ENCODE measurements at regions of chr5 and their contacts with region 1.

Region 1: GRCh38 chr5:149504677-149505076 is 46.6 kb downstream of the CSNK1A1 start:
- DNase-seq: no peak
- H3K4me3 ChIP-seq: no peak overlapping the region
- H3K27ac ChIP-seq: peak overlapping the region; percentile 50 to 68 (median 66)
- H3K4me1 ChIP-seq: peaks cover 5 to 77% (median 40%) of the 10 kb centered on the region in 4 donors
- H3K27me3 ChIP-seq: no peaks in the 10 kb centered on the region
- CTCF ChIP-seq: no peak
- EP300 ChIP-seq: no peak
- POLR2A ChIP-seq: no peak

Region 2: DNA sequence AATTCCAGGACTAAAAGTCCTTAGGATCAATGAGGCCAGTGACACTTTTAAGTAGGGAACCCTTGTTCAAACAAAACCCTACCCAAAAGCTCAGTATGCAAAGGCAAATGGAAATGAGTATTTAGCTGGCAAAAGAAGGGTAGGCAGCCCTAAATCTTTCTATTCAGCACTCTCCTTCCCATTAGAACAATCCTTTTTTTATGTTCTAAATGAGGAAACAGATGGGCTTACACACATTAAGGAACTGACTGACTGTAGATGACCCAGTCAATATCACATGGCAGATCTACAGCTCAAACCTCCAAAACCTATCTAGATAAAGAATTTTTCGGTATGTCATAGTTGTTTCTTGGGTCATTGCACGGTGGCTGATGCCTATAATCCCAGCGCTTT is 39.3 kb after region 1 on chr5:
- intact Hi-C with region 1: loop called (anchors 5 kb)
- DNase-seq: no peak
- H3K4me3 ChIP-seq: peak overlapping the region in 3 of 4 donors; percentile 22 to 32 (median 32)
- H3K27ac ChIP-seq: peak overlapping the region; percentile 69 to 99 (median 86)
- H3K4me1 ChIP-seq: peaks cover 90 to 100% (median 97%) of the 10 kb centered on the region in 4 donors
- H3K27me3 ChIP-seq: no peaks in the 10 kb centered on the region
- CTCF ChIP-seq: no peak
- EP300 ChIP-seq: no peak
- POLR2A ChIP-seq: no peak

Region 3: DNA sequence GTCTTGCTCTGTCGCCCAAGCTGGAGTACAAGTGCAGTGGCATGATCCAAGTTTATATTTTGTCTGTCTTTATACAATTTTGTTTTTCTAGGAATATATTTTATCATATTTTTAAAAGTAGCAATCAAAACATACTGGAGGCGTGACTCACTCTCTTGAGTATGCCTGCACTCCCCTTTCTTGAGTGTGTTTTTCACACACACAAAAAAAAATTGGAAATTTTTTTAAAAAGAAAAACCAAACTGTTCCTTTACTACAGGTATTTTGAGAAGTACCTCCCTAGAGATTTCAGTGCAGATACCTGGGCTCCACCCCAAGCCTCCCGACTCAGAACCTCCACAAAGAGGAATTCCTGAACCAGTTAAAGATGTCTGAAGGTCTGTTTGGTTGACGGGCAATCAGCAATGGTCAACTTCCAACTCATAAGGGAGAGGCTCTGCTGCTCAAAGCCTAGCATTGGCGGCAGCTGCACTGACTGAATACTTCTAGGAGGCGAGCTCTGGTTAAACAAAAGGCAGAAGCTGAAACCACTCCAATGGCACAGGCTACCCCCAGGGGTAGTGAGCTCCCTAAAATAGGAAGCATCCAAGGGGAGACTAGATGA is 412.5 kb after region 1 on chr5:
- intact Hi-C with region 1: no loop called
- DNase-seq: no peak
- H3K4me3 ChIP-seq: no peak overlapping the region
- H3K27ac ChIP-seq: no peak overlapping the region
- H3K4me1 ChIP-seq: no peaks in the 10 kb centered on the region
- H3K27me3 ChIP-seq: peaks cover 0 to 7% (median 0%) of the 10 kb centered on the region in 4 donors
- CTCF ChIP-seq: no peak
- EP300 ChIP-seq: no peak
- POLR2A ChIP-seq: no peak